Head of caudate nucleus (tissue), 42 donors: ENCODE measurements at regions of chr7 and their contacts with region 1.

Region 1: GRCh38 chr7:41977151-41977651 is 259.8 kb downstream of the GLI3 start:
- DNase-seq: peak in 22 of 42 donors; percentile 30 to 72 (median 52)

Region 2: DNA sequence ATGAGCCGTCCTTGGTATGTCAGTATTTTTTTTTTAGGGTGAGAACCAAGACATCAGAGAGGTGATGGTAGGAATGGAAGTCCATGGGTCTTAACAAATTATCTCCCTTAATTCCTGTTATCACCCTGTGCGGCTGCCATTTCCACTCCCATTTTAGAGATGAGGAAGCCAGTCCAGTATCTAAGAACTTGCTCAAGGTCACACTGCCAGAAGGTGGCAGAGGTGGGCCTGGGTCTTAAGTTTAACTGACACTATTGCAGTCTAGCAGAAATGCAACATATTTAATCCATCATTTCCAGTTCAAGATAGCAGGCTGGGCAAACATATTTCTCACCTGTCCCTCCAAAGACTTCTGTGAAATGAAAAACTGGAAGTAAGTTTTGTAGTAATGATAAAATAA is 151.5 kb after region 1 on chr7:
- intact Hi-C with region 1: no loop called
- DNase-seq: no peak

Region 3: DNA sequence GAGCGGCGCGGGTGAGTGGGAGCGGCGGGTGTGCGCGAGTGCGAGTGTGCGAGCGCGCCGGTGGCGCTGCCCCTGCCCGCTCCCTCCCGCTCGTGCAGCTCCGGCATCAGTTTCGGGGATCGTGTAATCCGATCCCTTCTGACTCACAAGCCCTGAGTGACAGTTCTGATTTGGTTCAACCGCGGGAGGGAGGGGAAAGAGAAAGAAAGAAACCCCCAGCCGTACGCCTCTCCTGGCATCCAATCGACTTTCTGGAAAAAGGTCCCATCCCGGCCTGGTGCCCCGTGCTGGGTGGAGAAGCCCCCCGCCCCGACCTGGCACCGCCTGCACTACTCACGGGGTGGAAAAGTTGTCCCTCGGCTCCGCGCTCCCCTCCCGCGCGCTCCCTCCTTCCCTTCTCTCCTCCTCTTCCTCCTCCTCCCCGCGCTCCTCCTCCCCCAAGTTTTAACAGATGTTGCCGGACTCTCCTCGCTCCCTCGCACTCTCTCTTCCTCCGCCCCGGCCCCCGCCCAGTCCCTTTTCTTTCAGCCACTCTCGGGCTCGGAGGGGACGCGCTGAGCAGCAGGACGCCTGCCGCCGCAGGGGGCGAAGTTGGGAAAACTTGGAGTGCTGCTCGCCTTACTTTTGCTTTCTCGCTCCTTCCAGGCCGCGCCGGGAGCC is 260.1 kb after region 1 on chr7 and contains the start of gene GLI3:
- intact Hi-C with region 1: loop called (anchors 10 kb)
- DNase-seq: peak in 38 of 42 donors; percentile 18 to 83 (median 58)

Region 4: GRCh38 chr7:42831718-42832431 is 854.7 kb after region 1 on chr7:
- intact Hi-C with region 1: loop called (anchors 10 kb)
- DNase-seq: peak; percentile 46 to 84 (median 70)